ENCODE measurements at regions of chr16 and their contacts with region 1.

Region 1: DNA sequence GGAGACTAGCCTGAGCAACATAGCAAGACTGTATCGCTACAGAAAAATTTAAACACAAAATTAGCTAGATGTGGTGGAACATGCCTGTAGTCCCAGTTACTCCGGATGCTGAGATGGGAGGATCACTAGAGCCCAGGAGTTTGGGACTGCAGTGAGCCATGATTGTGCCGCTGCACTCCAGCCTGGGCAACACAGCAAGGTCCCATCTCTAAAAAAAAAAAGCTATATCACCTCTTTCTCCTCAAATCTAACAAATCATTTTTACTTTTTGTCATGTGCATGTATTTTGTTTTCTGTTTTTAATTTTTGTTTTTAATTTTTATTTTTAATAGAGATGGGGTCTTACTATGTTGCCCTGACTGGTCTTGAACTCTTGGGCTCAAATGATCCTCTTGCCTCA is 5.9 kb downstream of the DUS2 start:
- DNase-seq: no peak
- H3K4me3 ChIP-seq: no peak overlapping the region
- H3K27ac ChIP-seq: no peak overlapping the region
- H3K27me3 ChIP-seq: no peaks in the 10 kb centered on the region
- CTCF ChIP-seq: no peak

Region 2: DNA sequence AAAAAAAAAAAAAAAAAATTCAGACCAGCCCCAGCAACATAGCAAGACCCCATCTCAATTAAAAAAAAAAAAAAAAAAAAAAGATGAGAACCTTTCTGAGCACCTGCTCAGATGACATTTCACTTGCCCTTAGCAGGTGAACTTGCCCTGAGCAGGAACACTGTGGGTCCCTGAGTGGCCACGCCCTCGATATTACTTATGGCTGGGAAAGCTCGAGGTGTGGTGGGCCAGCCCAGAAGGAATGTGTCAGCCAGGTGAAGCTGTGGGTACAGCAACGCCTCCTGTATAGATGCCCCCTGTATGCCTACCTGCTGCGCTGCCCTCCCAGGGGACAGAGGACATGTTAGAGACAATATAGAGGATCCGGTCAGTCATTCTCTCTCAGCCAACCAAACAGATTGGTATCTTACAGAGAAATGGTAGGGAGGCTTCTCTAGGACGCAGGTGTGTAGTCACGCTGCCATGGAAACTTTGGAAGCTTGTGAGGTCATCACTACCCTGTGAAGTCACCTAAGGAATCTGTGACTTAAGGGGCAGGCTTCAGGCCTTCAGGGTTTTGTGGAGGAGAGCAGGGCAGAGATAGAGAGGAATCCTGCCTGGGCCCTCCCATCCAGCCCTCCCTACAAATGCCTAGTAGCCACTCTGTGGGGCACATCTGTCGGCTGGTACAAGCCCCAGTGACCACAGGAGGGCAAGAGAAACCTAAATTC is 13.4 kb before region 1 on chr16 and contains the start of gene DPEP2NB:
- CTCF ChIA-PET with region 1: no interaction called
- POLR2A ChIA-PET with region 1: interaction called, 10 read pairs
- DNase-seq: no peak
- H3K4me3 ChIP-seq: no peak within 1 kb of the TSS
- H3K27ac ChIP-seq: no peak within 1 kb of the TSS
- H3K27me3 ChIP-seq: peaks cover 5% of the 10 kb centered on the region
- CTCF ChIP-seq: no peak
- polyA plus RNA-seq, gene DPEP2NB: not detected in 2 replicates

Region 3: GRCh38 chr16:68131813-68132706 is 103.1 kb after region 1 on chr16:
- CTCF ChIA-PET with region 1: no interaction called
- POLR2A ChIA-PET with region 1: no interaction called
- DNase-seq: no peak
- H3K4me3 ChIP-seq: no peak overlapping the region
- H3K27ac ChIP-seq: no peak overlapping the region
- H3K27me3 ChIP-seq: no peaks in the 10 kb centered on the region
- CTCF ChIP-seq: no peak